Activated CD8-positive, alpha-beta memory T cell treated with anti-CD3 and anti-CD28 coated beads, Interleukin-2, amount 10 ng/mL, durations not matched to agents 7 days and 5 days (primary cell): ENCODE measurements at regions of chr17 and their contacts with region 1.

Region 1: GRCh38 chr17:30291543-30292285 is at the start of gene BLMH:
- DNase-seq: peak; percentile 88
- ATAC-seq: peak; percentile 92
- H3K4me3 Mint-ChIP-seq: peak within 1 kb of the TSS; percentile 98
- H3K27ac Mint-ChIP-seq: peak within 1 kb of the TSS; percentile 90
- H3K4me1 Mint-ChIP-seq: peaks cover 22% of the 10 kb centered on the region
- H3K27me3 Mint-ChIP-seq: no peaks in the 10 kb centered on the region
- total RNA-seq, gene BLMH: 68.0 to 70.5 TPM

Region 2: DNA sequence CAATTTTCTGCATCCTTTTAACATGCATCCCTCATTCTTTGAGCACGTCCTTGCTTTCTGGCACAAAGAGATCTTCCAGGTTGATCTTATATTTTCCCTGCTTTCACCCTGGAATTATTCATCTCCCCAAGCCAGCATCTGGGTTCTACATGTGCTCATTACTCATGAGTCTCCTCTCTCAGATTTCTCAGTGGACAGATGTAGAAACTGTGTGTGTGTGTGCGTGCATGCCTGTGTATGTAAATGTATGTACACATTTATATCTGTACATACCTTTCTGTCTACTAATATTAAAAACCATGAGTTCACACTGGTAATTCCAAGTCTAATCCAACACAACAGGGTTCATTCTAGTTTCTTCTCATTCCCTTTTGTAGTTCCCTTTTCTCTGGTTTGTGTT is 217.0 kb before region 1 on chr17:
- CTCF ChIA-PET with region 1: no interaction called
- DNase-seq: no peak
- ATAC-seq: no peak
- H3K4me3 Mint-ChIP-seq: no peak overlapping the region
- H3K27ac Mint-ChIP-seq: no peak overlapping the region
- H3K4me1 Mint-ChIP-seq: no peaks in the 10 kb centered on the region
- H3K27me3 Mint-ChIP-seq: peaks cover 52% of the 10 kb centered on the region

Region 3: DNA sequence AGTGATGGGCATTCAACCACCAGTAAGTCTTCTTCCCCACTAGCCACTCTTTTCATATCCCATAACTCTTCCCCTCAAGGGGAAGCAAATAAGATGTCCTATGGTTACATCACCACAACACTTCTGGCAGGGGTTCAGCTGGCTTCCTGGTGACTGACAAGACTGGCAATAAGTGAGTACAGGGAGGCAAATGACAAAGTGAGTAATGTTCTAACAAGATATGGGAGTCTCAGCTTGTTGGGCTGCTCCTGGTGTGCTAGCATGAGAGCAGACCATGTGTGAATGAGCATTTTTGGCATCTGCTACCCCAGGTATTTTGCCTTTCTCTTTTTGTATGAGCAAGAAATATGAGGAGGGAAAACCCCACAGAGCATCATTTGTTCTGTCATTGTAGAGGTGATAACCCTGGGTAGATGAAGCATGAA is 32.2 kb after region 1 on chr17:
- CTCF ChIA-PET with region 1: interaction called, 10 read pairs
- DNase-seq: peak; percentile 62
- ATAC-seq: peak; percentile 73
- H3K4me3 Mint-ChIP-seq: no peak overlapping the region
- H3K27ac Mint-ChIP-seq: peak overlapping the region; percentile 67
- H3K4me1 Mint-ChIP-seq: peaks cover 19% of the 10 kb centered on the region
- H3K27me3 Mint-ChIP-seq: peaks cover 2% of the 10 kb centered on the region